GM12878 (cell line): ENCODE measurements at regions of chr2 and their contacts with region 1.

Region 1: DNA sequence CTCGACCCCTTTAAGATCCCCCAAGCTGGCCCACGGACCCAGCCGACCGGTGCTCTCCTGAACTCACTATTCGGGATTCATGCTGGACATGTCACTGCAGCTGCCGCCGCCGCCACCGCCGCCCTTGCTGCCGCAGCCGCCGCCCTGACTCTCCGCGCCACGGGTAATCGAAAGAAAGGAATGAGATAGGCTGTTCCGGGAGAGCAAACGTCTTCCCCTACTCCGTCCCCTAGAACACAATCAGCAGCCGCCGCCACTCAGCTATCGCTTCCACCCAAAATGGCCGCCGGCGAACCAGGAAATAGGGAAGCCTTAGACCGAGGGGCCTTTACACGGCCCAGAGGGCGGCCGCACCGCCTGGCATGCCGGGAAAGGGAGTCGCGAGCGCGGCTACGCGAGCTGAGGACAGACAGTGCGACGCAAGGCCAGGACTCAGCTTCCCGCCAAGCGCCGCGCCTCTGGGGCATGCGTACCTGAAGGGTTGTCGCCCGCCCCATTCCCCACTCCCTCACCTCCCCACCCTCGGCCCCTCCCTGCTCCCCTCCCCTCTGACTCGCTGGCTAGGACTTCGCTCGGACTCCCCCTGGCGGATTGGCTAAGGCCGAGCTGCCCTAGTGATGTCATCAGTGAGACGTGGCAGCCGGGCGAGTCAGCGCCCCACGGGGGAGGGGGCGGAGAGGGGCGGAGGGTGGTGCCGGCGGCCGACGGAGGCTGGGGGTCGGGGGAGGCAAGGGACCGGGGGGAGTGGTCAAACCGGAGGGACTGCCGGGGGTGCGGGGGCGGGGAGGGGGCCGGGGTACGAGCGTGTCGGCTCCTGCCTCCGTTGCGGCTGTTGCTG is at the start of gene RAB1A:
- DNase-seq: peak; percentile 97
- ATAC-seq: peak; percentile 95
- H3K4me3 ChIP-seq: peak within 1 kb of the TSS; percentile 93
- H3K27ac ChIP-seq: peak within 1 kb of the TSS; percentile 87
- H3K4me1 ChIP-seq: no peaks in the 10 kb centered on the region
- H3K27me3 ChIP-seq: no peaks in the 10 kb centered on the region
- CTCF ChIP-seq: peak; percentile 38 to 58 (median 40); a peak in 5 of 6 replicates
- EP300 ChIP-seq: 0 out of 4 replicates have a peak, but pooled peaks of 1 of the 2 experiments have one; percentile 44
- POLR2A ChIP-seq: peak; percentile 93
- RAD21 ChIP-seq: peak; percentile 50
- polyA plus RNA-seq, gene RAB1A: 48.9 to 71.2 TPM

Region 2: GRCh38 chr2:64932371-64933216 is 197.5 kb before region 1 on chr2:
- CTCF ChIA-PET with region 1: no interaction called
- POLR2A ChIA-PET with region 1: no interaction called
- RAD21 ChIA-PET with region 1: no interaction called
- SMC1A ChIA-PET with region 1: no interaction called
- in situ Hi-C with region 1: no loop called
- intact Hi-C with region 1: loop called (anchors 5 kb)
- DNase-seq: peak; percentile 98
- ATAC-seq: peak; percentile 81
- H3K4me3 ChIP-seq: peak overlapping the region; percentile 96
- H3K27ac ChIP-seq: peak overlapping the region; percentile 95
- H3K4me1 ChIP-seq: peaks cover 28% of the 10 kb centered on the region
- H3K27me3 ChIP-seq: no peaks in the 10 kb centered on the region
- CTCF ChIP-seq: no peak
- EP300 ChIP-seq: peak; percentile 62 to 83; a peak in 3 of 4 replicates
- POLR2A ChIP-seq: peak; percentile 84
- RAD21 ChIP-seq: 0 out of 2 replicates have a peak, but pooled peaks have one; percentile 1

Region 3: GRCh38 chr2:65056215-65057053 is 73.6 kb before region 1 on chr2 and contains the start of gene CEP68:
- CTCF ChIA-PET with region 1: interaction called, 4 read pairs
- POLR2A ChIA-PET with region 1: interaction called, 18 read pairs
- RAD21 ChIA-PET with region 1: interaction called, 37 read pairs
- SMC1A ChIA-PET with region 1: interaction called, 6 read pairs
- in situ Hi-C with region 1: no loop called
- intact Hi-C with region 1: loop called (anchors 1 kb)
- DNase-seq: peak; percentile 90
- ATAC-seq: peak; percentile 90
- H3K4me3 ChIP-seq: peak within 1 kb of the TSS; percentile 74
- H3K27ac ChIP-seq: peak within 1 kb of the TSS; percentile 63
- H3K4me1 ChIP-seq: peaks cover 46% of the 10 kb centered on the region
- H3K27me3 ChIP-seq: no peaks in the 10 kb centered on the region
- CTCF ChIP-seq: no peak
- EP300 ChIP-seq: no peak
- POLR2A ChIP-seq: peak; percentile 92
- RAD21 ChIP-seq: no peak
- polyA plus RNA-seq, gene CEP68: 1.1 to 2.2 TPM

Region 4: DNA sequence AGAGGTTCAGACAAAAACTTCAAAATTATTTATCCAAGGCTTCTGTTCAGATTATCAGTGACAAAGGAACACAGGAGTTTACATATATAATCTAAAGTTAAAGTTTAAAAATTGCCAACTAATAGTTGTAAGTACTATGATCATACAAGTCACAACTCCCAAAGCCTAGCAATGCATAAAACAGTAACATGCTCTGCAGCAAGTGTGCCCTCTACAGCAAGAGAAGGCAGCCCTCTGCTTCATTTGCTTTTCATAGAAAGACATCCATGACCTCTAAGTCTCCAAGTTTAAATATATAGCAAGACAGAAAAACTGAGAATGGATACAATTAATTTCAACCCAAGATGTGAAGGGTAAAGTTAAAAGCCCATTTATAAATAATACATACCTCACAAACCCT is 13.4 kb before region 1 on chr2:
- CTCF ChIA-PET with region 1: interaction called, 8 read pairs
- POLR2A ChIA-PET with region 1: interaction called, 18 read pairs
- RAD21 ChIA-PET with region 1: interaction called, 8 read pairs
- SMC1A ChIA-PET with region 1: interaction called, 5 read pairs
- in situ Hi-C with region 1: no loop called
- intact Hi-C with region 1: no loop called
- DNase-seq: no peak
- ATAC-seq: peak; percentile 37
- H3K4me3 ChIP-seq: no peak overlapping the region
- H3K27ac ChIP-seq: no peak overlapping the region
- H3K4me1 ChIP-seq: no peaks in the 10 kb centered on the region
- H3K27me3 ChIP-seq: no peaks in the 10 kb centered on the region
- CTCF ChIP-seq: no peak
- EP300 ChIP-seq: no peak
- POLR2A ChIP-seq: no peak
- RAD21 ChIP-seq: no peak

Region 5: GRCh38 chr2:65164426-65164891 is 34.4 kb after region 1 on chr2:
- CTCF ChIA-PET with region 1: interaction called, 6 read pairs
- POLR2A ChIA-PET with region 1: interaction called, 10 read pairs
- RAD21 ChIA-PET with region 1: interaction called, 3 read pairs
- SMC1A ChIA-PET with region 1: no interaction called
- in situ Hi-C with region 1: no loop called
- intact Hi-C with region 1: no loop called
- DNase-seq: no peak
- ATAC-seq: no peak
- H3K4me3 ChIP-seq: no peak overlapping the region
- H3K27ac ChIP-seq: no peak overlapping the region
- H3K4me1 ChIP-seq: peaks cover 3% of the 10 kb centered on the region; the same call in 1 of the 2 replicates
- H3K27me3 ChIP-seq: no peaks in the 10 kb centered on the region
- CTCF ChIP-seq: no peak
- EP300 ChIP-seq: no peak
- POLR2A ChIP-seq: no peak
- RAD21 ChIP-seq: no peak

Region 6: GRCh38 chr2:65227425-65228262 is 97.6 kb after region 1 on chr2 and contains the start of gene ACTR2:
- CTCF ChIA-PET with region 1: interaction called, 4 read pairs
- POLR2A ChIA-PET with region 1: interaction called, 31 read pairs
- RAD21 ChIA-PET with region 1: interaction called, 15 read pairs
- SMC1A ChIA-PET with region 1: interaction called, 4 read pairs
- in situ Hi-C with region 1: no loop called
- intact Hi-C with region 1: loop called (anchors 5 kb)
- DNase-seq: peak; percentile 90
- ATAC-seq: peak; percentile 92
- H3K4me3 ChIP-seq: peak within 1 kb of the TSS; percentile 97
- H3K27ac ChIP-seq: peak within 1 kb of the TSS; percentile 98
- H3K4me1 ChIP-seq: peaks cover 12% of the 10 kb centered on the region
- H3K27me3 ChIP-seq: no peaks in the 10 kb centered on the region
- CTCF ChIP-seq: no peak
- EP300 ChIP-seq: 0 out of 4 replicates have a peak, but pooled peaks of 1 of the 2 experiments have one; percentile 22
- POLR2A ChIP-seq: peak; percentile 98
- RAD21 ChIP-seq: no peak
- polyA plus RNA-seq, gene ACTR2: 94.2 to 124 TPM